BJ (cell line): ENCODE measurements at regions of chr7 and their contacts with region 1.

Region 1: GRCh38 chr7:98591926-98592325 is 25.2 kb upstream of the NPTX2 start:
- DNase-seq: no peak
- H3K4me3 ChIP-seq: no peak overlapping the region
- H3K27me3 ChIP-seq: no peaks in the 10 kb centered on the region
- CTCF ChIP-seq: no peak

Region 2: GRCh38 chr7:98602755-98603398 is 11.0 kb after region 1 on chr7:
- CTCF ChIA-PET with region 1: interaction called, 11 read pairs
- POLR2A ChIA-PET with region 1: no interaction called
- DNase-seq: no peak
- H3K4me3 ChIP-seq: no peak overlapping the region
- H3K27me3 ChIP-seq: no peaks in the 10 kb centered on the region
- CTCF ChIP-seq: no peak